Left cardiac atrium (tissue), 4 donors: ENCODE measurements at regions of chr1 and their contacts with region 1.

Region 1: GRCh38 chr1:151993654-151994496 is at the start of gene S100A10:
- DNase-seq: peak; percentile 87
- ATAC-seq: peak; percentile 85 to 91
- total RNA-seq, gene S100A10: 313 to 335 TPM

Region 2: DNA sequence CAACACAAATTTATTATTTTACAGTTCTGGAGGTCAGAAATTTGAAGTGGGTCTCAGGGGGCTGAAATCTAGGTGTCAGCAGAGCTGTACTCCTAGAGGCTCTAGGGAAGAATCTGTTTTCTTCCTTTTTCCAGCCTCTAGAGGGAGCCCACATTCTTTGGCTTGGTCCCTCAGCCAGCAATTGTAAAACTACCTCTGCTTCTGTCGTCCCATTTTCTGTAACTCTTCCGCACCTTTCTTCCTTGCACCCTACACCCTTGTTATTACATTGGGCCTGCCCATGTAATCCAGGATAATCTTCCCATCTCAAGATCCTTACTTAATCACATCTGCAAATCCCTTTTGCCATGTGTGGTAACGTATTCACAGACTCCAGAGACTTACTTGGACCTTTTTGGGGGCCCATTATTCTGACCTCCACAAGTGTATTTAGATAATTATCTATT is 59.8 kb before region 1 on chr1:
- intact Hi-C with region 1: loop called (anchors 2 to 5 kb)
- DNase-seq: no peak
- ATAC-seq: peak; percentile 85 to 95

Region 3: GRCh38 chr1:151945725-151946364 is 48.0 kb before region 1 on chr1:
- intact Hi-C with region 1: loop called in 1 of 2 experiments (anchors 2 kb)
- DNase-seq: peak; percentile 92
- ATAC-seq: peak; percentile 82 to 91

Region 4: DNA sequence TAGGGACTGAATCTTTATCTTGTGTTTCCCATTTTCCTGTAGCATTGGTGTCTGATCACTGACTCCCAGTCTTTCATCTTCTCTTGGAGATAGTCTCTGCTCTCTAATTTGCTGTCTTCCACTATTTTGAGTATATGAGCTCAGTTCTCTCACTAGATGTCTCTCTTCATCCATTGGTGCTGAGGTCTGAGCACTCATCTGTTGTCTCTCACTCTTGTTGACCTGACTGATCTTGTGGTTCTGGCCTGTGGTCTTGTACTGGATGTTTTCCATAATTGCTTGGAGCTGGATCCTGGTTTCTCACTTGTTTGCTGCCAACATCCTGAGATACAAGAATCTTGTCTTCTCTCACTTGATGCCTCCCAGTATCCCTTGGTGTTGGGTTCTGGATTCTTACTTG is 68.1 kb after region 1 on chr1:
- intact Hi-C with region 1: no loop called
- DNase-seq: no peak
- ATAC-seq: no peak